Thyroid gland (tissue), 4 donors: ENCODE measurements at regions of chr4 and their contacts with region 1.

Region 1: DNA sequence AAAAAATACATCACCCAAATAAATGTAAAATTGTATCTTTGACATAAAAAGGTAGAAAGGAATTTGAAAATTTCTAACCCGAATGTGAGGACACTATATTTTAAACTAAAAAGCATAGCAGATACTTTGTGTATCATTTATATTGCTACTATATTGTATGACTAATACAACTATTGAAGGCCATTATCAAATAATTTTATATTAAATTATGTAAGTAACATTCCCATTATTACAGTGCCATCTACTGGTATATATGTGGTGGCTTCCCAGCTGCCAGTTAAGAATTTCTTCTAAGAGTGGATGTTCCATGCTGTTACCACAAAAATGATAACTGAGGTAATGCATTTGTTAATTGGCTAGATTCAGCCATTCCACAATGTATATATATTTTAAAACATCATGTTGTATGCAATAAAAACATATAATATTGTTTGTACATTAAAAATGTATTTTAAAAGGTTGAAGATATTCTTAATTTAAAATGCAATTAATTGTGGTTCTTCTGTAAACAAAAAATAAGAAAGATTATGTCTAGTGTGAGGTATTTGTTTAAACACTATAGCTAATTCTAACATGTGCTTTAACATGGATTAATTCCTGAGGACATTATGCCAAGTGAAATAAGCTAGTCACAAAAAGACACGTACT is 65.3 kb downstream of the EGF start:
- DNase-seq: no peak
- H3K4me3 ChIP-seq: no peak overlapping the region
- H3K27ac ChIP-seq: no peak overlapping the region
- H3K4me1 ChIP-seq: no peaks in the 10 kb centered on the region
- H3K27me3 ChIP-seq: no peaks in the 10 kb centered on the region
- CTCF ChIP-seq: peak in 5 of 6 experiments; percentile 13 to 65 (median 49)
- POLR2A ChIP-seq: no peak

Region 2: DNA sequence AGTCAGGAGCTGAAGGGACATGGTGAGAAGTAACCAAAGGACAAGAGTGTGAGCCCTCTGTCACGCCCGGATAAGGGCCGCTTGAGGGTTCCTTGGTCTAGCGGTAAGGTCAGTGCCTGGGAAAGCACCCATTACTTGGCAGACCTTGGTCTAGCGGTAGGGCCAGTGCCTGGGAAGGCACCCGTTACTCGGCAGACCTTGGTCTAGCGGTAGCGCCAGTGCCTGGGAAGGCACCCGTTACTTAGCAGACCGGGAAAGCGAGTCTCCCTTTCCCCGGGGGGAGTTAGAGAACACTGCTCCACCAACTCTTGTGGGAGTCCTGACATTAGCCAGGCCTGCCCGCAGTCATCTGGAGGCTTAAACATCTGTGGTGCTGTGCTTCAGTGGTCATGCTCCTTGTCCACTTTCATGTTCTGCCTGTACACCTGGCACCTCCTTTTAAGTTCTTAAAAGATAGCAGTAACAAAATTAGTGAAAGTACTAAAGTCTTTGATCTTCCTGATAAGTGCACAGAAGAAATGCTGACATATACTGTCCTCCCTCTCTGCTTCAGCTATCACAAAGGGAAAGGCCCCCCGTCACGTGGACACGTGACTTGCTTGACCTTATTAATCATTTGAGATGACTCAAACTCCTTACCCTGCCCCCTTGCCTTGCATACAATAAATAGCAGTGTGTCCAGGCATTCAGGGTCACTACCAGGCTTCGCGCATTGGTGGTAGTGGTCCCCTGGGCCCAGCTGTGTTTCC is 553.7 kb before region 1 on chr4:
- intact Hi-C with region 1: loop called (anchors 5 kb)
- DNase-seq: peak in 1 of 2 donors; percentile 2
- H3K4me3 ChIP-seq: no peak overlapping the region
- H3K27ac ChIP-seq: no peak overlapping the region
- H3K4me1 ChIP-seq: no peaks in the 10 kb centered on the region
- H3K27me3 ChIP-seq: no peaks in the 10 kb centered on the region
- CTCF ChIP-seq: no peak
- POLR2A ChIP-seq: no peak

Region 3: GRCh38 chr4:109665783-109666485 is 312.0 kb before region 1 on chr4:
- intact Hi-C with region 1: no loop called
- DNase-seq: no peak
- H3K4me3 ChIP-seq: no peak overlapping the region
- H3K27ac ChIP-seq: no peak overlapping the region
- H3K4me1 ChIP-seq: no peaks in the 10 kb centered on the region
- H3K27me3 ChIP-seq: no peaks in the 10 kb centered on the region
- CTCF ChIP-seq: no peak
- POLR2A ChIP-seq: no peak